ENCODE measurements at regions of chr9 and their contacts with region 1.

Region 1: DNA sequence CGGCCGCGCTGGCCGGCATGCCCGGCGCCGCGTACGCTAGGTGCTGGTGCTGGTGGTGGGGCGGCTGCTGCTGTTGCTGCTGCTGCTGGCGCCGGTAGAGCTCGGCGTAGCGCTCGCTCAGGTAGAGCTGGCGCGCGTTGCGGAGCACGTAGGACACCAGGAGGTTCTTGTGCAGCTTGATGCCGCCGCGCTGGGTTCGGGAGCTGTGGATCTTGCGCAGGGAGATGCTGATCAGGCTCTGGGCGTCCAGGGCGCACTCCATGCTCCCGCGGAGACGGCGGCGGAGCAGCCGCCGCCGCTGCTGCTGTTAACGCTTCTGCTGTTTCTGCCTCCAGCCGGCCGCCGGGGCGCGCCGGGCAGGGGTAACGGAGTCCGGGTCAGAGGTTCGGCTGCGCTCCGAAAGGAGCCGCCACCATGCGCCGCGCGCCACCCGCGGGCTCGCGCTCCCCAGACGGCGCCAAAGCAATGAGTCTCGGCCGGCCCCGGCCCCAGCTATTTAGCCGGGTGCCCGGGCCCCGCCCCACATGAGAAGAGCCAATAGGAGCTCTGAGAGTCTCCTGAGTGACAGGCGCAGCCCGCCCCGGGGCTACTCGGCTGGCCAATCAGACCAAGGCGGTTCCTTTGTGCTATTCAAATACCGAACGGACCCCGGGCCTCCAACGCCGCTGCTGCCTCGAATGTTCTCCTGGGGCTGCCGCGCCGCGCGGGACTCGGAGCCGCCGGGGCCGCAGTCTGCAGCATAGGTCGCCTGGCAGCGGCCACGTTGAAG is at the start of gene IER5L:
- DNase-seq: peak; percentile 93
- H3K4me3 Mint-ChIP-seq: peak within 1 kb of the TSS; percentile 94
- H3K27ac Mint-ChIP-seq: peak within 1 kb of the TSS; percentile 78
- H3K4me1 Mint-ChIP-seq: peaks cover 31% of the 10 kb centered on the region
- H3K27me3 Mint-ChIP-seq: no peaks in the 10 kb centered on the region
- CTCF ChIP-seq: no peak
- total RNA-seq, gene IER5L: 53.1 and 60.3 TPM in 2 replicates

Region 2: GRCh38 chr9:128927731-128928411 is 250.1 kb before region 1 on chr9:
- CTCF ChIA-PET with region 1: no interaction called
- intact Hi-C with region 1: no loop called
- DNase-seq: peak; percentile 61
- H3K4me3 Mint-ChIP-seq: no peak overlapping the region
- H3K27ac Mint-ChIP-seq: peak overlapping the region; percentile 39
- H3K4me1 Mint-ChIP-seq: peaks cover 7% of the 10 kb centered on the region
- H3K27me3 Mint-ChIP-seq: no peaks in the 10 kb centered on the region
- CTCF ChIP-seq: peak; percentile 73

Region 3: DNA sequence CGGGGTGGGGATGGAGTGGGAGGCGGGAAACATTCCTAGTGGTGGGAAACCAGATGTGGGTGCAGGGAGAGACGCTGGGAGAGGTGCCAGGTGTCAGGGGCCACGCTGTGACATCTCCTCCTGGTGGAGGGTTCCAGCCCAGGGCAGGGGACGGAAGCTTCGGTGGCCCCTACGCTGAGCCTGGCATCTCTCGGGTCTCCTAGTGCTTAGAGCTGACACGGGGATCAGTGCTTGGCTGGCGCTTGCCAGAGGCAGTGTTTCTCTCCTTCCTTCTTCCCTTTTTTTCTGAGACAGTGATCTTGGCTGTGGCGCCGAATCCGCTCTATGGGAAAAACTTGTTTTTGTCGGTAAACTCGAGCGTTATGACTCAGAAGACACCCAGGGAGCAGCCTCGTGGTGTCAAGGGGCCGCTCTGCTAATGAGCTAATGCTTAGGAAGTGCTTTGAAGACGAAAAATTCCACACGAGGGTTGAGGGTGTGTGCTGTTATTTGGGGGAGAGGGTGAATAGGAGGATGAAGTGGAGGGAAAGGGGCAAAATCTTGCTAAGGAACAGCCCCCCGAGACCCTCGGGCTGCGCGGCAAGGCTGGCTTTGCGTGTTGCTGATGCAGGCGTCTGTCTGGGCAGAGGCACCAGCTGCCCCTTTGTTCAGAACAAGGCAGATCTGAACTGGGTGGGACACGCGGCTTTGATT is 20.5 kb after region 1 on chr9:
- CTCF ChIA-PET with region 1: no interaction called
- intact Hi-C with region 1: no loop called
- DNase-seq: no peak
- H3K4me3 Mint-ChIP-seq: no peak overlapping the region
- H3K27ac Mint-ChIP-seq: no peak overlapping the region
- H3K4me1 Mint-ChIP-seq: no peaks in the 10 kb centered on the region
- H3K27me3 Mint-ChIP-seq: peaks cover 12% of the 10 kb centered on the region
- CTCF ChIP-seq: no peak

Region 4: GRCh38 chr9:129333953-129334724 is 156.2 kb after region 1 on chr9:
- CTCF ChIA-PET with region 1: interaction called, 7 read pairs
- intact Hi-C with region 1: loop called (anchors 2 kb)
- DNase-seq: peak; percentile 95
- H3K4me3 Mint-ChIP-seq: peak overlapping the region; percentile 63
- H3K27ac Mint-ChIP-seq: peak overlapping the region; percentile 98
- H3K4me1 Mint-ChIP-seq: peaks cover 26% of the 10 kb centered on the region
- H3K27me3 Mint-ChIP-seq: no peaks in the 10 kb centered on the region
- CTCF ChIP-seq: no peak

Region 5: DNA sequence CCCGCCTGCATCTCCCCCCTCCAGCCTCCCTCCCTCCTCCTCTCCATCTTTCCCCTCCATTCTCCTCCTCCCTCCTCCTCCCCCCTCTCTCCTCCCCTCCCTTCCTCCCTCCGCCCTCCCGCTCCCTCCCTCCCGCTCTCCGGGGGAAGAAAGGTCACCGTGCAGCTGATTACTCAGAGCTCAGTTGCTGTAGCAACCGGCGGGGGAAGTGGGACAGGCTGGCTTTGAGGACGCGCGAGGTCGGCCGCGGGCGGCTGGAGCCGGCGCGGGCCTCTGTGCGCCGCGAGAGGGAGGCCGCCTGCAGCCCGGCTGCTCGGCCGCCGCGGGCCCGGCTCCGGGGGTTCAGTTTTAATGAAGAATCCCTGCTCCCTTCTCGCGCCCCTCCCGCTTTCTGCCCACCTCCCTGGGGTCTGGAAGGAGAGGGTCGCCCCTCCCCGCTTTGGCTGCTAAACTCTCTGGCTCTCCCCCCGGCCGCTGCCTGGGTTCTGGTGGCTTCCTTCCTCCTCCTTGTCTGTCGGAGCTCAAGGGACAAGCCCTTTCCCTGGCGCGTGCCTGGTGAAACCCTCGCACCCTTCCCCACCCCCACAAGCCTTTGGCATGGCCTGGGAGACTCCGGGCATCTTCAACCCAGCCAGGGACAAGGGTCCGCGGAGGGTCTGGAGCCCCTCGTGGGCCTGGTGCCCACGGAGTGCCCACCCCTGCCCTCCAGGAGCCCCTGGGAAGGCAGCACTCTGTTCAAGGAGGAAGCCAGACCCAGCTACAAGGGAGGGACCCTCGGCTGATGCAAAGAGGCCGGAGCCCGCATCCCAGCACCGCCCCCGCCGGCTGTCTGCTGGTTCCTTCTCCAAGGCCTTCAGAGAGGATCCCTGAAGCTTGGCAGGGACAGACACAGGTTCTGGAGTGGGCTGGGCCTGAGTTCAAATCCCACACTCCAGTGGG is 282.6 kb after region 1 on chr9:
- CTCF ChIA-PET with region 1: interaction called, 11 read pairs
- intact Hi-C with region 1: no loop called
- DNase-seq: peak; percentile 87
- H3K4me3 Mint-ChIP-seq: peak overlapping the region; percentile 60
- H3K27ac Mint-ChIP-seq: peak overlapping the region; percentile 74
- H3K4me1 Mint-ChIP-seq: no peaks in the 10 kb centered on the region
- H3K27me3 Mint-ChIP-seq: no peaks in the 10 kb centered on the region
- CTCF ChIP-seq: no peak

Region 6: DNA sequence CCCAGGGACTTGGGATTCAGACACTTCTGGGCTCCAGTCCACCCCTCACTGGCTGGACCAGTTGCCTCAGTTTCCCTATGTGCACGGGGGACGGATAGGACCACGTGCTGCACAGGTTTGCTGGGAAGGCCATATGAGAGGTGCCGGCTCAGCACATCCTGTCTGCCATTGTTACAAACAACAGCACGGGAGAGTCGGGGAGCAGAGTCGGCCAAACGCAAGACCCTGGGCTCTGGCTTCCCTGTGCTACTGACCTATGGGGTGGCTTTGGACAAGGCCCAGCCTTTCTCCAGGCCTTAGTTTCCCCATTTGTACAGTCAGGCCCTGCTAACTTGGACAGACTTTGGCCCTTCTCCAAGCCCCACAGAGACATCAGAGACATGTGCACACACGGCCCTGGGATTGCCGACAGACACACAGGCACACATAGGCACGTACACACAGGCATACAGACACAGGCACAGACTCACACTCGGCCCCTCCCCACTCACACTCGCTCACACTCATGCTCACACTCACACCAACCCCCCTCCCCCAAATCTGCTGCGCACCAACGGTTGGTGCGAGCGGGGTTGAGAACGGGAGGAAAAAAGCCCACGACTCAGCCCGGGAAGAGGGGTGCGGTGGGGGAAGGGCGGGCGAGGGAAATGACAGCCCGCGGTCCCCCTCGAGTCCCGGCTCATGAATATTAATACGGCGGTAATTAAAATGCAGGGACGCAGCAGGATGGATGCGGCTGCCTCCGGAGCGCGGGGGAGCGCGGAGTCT is 309.9 kb after region 1 on chr9:
- CTCF ChIA-PET with region 1: interaction called, 4 read pairs
- intact Hi-C with region 1: loop called (anchors 5 kb)
- DNase-seq: no peak
- H3K4me3 Mint-ChIP-seq: peak overlapping the region; percentile 59
- H3K27ac Mint-ChIP-seq: peak overlapping the region; percentile 98
- H3K4me1 Mint-ChIP-seq: peaks cover 65% of the 10 kb centered on the region
- H3K27me3 Mint-ChIP-seq: no peaks in the 10 kb centered on the region
- CTCF ChIP-seq: no peak

Region 7: DNA sequence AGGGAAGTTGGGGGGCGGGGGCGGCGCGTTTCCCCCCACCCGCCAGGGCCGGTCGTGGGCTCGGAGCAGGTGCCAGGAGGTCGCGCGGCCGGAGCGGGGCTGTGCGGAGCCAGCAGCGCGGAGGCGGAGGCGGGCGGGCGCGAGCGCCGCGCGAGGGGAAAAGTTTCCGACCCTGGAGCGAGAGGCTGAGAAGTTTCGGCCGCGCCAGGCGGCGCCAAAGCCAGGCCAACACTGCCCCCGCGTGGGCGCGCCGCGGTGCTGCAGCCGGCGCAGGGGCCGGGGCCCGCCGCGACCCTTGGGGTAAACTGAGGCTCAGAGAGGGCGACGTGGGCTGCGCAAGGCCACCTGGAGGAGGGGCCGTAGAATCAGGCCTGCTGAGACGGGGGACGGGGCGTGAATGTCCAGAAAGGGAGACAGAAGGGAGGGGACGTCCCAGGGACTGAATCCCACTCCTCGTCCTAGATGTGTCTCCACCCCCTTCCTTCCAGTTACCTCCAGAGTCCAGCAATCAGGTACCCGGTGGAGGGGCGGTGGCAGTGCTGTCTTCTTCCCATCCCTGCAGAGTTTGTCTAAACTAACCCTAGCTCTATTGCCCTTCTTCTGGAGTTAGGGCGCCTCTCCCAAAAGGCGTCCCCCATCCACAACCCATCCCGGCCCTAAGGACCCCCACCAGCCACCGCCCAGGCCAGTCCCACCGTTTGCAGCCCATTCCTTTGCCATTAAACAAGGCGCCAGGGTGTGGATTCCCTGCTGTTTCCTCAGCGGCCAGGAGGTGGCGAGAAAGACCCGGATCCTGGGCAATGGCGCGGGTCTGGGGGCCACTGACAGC is 432.7 kb after region 1 on chr9:
- CTCF ChIA-PET with region 1: interaction called, 8 read pairs
- intact Hi-C with region 1: loop called (anchors 10 kb)
- DNase-seq: peak; percentile 75
- H3K4me3 Mint-ChIP-seq: peak overlapping the region; percentile 79
- H3K27ac Mint-ChIP-seq: no peak overlapping the region
- H3K4me1 Mint-ChIP-seq: peaks cover 21% of the 10 kb centered on the region
- H3K27me3 Mint-ChIP-seq: no peaks in the 10 kb centered on the region
- CTCF ChIP-seq: peak; percentile 90

Measured in Calu3 (cell line).